HepG2 (cell line): ENCODE measurements at regions of chr17 and their contacts with region 1.

Region 1: GRCh38 chr17:64534175-64534574 is 27.4 kb downstream of the CEP95 start:
- DNase-seq: no peak
- ATAC-seq: peak; percentile 17; the same call in 1 of the 3 replicates
- H3K4me3 ChIP-seq: no peak overlapping the region
- H3K27ac ChIP-seq: no peak overlapping the region
- H3K4me1 ChIP-seq: no peaks in the 10 kb centered on the region
- H3K27me3 ChIP-seq: no peaks in the 10 kb centered on the region
- CTCF ChIP-seq: 0 out of 2 replicates have a peak, but pooled peaks have one; percentile 18
- EP300 ChIP-seq: no peak
- POLR2A ChIP-seq: peak in 1 of 2 experiments; percentile 35; a peak in 1 of 4 replicates
- RAD21 ChIP-seq: no peak

Region 2: GRCh38 chr17:64599187-64599676 is 65.1 kb after region 1 on chr17:
- CTCF ChIA-PET with region 1: no interaction called
- POLR2A ChIA-PET with region 1: no interaction called
- in situ Hi-C with region 1: no loop called
- intact Hi-C with region 1: no loop called
- DNase-seq: no peak
- ATAC-seq: no peak
- H3K4me3 ChIP-seq: no peak overlapping the region
- H3K27ac ChIP-seq: no peak overlapping the region
- H3K4me1 ChIP-seq: peaks cover 12% of the 10 kb centered on the region
- H3K27me3 ChIP-seq: no peaks in the 10 kb centered on the region
- CTCF ChIP-seq: no peak
- EP300 ChIP-seq: no peak
- POLR2A ChIP-seq: no peak
- RAD21 ChIP-seq: no peak

Region 3: GRCh38 chr17:64635647-64636307 is 101.6 kb after region 1 on chr17:
- CTCF ChIA-PET with region 1: no interaction called
- POLR2A ChIA-PET with region 1: no interaction called
- in situ Hi-C with region 1: loop called (anchors 25 kb)
- intact Hi-C with region 1: no loop called
- DNase-seq: no peak
- ATAC-seq: no peak
- H3K4me3 ChIP-seq: no peak overlapping the region
- H3K27ac ChIP-seq: no peak overlapping the region
- H3K4me1 ChIP-seq: peaks cover 16% of the 10 kb centered on the region
- H3K27me3 ChIP-seq: no peaks in the 10 kb centered on the region
- CTCF ChIP-seq: no peak
- EP300 ChIP-seq: no peak
- POLR2A ChIP-seq: no peak
- RAD21 ChIP-seq: no peak

Region 4: GRCh38 chr17:64648234-64648633 is 114.1 kb after region 1 on chr17:
- CTCF ChIA-PET with region 1: no interaction called
- POLR2A ChIA-PET with region 1: no interaction called
- in situ Hi-C with region 1: loop called (anchors 25 kb)
- intact Hi-C with region 1: loop called (anchors 5 kb)
- DNase-seq: no peak
- ATAC-seq: no peak
- H3K4me3 ChIP-seq: no peak overlapping the region
- H3K27ac ChIP-seq: no peak overlapping the region
- H3K4me1 ChIP-seq: peaks cover 14% of the 10 kb centered on the region
- H3K27me3 ChIP-seq: no peaks in the 10 kb centered on the region
- CTCF ChIP-seq: no peak
- EP300 ChIP-seq: no peak
- POLR2A ChIP-seq: no peak
- RAD21 ChIP-seq: no peak

Region 5: DNA sequence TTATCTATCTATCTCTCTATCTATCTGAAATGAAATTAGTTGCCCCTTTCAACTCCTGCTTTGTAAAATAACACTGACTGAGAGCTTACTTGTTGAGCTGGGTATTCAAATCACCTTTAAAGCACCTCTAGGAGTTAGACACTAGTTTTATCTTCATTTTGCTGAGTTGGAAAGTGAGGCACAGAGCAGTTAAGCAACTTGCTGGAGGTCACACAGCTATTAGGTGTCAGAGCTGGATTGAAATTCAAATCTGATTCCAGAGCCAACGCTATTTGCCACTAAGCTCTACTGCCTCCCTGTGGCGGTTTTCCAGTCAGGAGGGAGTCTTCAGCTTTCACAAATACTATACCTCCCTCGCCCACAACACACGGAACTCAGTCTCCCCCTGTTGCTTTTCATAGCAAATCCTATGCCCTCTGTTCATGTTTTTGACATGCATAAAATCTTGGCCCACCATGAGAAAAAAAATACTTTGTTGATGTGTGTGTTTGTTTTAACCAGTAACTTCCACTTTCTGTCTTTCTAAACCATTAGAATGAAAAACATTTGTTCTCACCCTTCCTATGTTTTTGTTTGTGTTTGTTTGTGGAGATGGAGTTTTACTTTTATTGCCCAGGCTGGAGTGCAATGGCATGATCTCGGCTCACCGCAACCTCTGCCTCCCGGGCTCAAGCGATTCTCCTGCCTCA is 202.8 kb after region 1 on chr17:
- CTCF ChIA-PET with region 1: no interaction called
- POLR2A ChIA-PET with region 1: no interaction called
- in situ Hi-C with region 1: no loop called
- intact Hi-C with region 1: loop called (anchors 10 kb)
- DNase-seq: peak; percentile 51
- ATAC-seq: peak; percentile 57
- H3K4me3 ChIP-seq: no peak overlapping the region
- H3K27ac ChIP-seq: no peak overlapping the region
- H3K4me1 ChIP-seq: peaks cover 45% of the 10 kb centered on the region
- H3K27me3 ChIP-seq: no peaks in the 10 kb centered on the region
- CTCF ChIP-seq: peak; percentile 58
- EP300 ChIP-seq: no peak
- POLR2A ChIP-seq: no peak
- RAD21 ChIP-seq: peak; percentile 78